ENCODE measurements at regions of chr1 and their contacts with region 1.

Region 1: GRCh38 chr1:23303524-23303923 is 40.6 kb downstream of the HNRNPR start:
- DNase-seq: peak; percentile 54
- H3K4me3 ChIP-seq: no peak overlapping the region
- H3K27ac ChIP-seq: peak overlapping the region; percentile 52
- H3K4me1 ChIP-seq: peaks cover 47% of the 10 kb centered on the region
- H3K27me3 ChIP-seq: no peaks in the 10 kb centered on the region
- CTCF ChIP-seq: no peak
- POLR2A ChIP-seq: no peak

Region 2: GRCh38 chr1:23322770-23323169 is 19.2 kb after region 1 on chr1:
- CTCF ChIA-PET with region 1: interaction called, 12 read pairs
- POLR2A ChIA-PET with region 1: no interaction called
- dilution Hi-C with region 1: no loop called
- intact Hi-C with region 1: no loop called
- DNase-seq: no peak
- H3K4me3 ChIP-seq: no peak overlapping the region
- H3K27ac ChIP-seq: no peak overlapping the region
- H3K4me1 ChIP-seq: peaks cover 8% of the 10 kb centered on the region
- H3K27me3 ChIP-seq: no peaks in the 10 kb centered on the region
- CTCF ChIP-seq: no peak
- POLR2A ChIP-seq: no peak